GM12878 (cell line): ENCODE measurements at regions of chr20 and their contacts with region 1.

Region 1: GRCh38 chr20:19661717-19662636 is 96.1 kb upstream of the RIN2 start:
- DNase-seq: no peak
- ATAC-seq: peak; percentile 72
- H3K4me3 ChIP-seq: no peak overlapping the region
- H3K27ac ChIP-seq: no peak overlapping the region
- H3K4me1 ChIP-seq: peaks cover 11% of the 10 kb centered on the region
- H3K27me3 ChIP-seq: no peaks in the 10 kb centered on the region
- CTCF ChIP-seq: peak; percentile 96 to 99 (median 99); a peak in 5 of 6 replicates
- EP300 ChIP-seq: no peak
- POLR2A ChIP-seq: no peak
- RAD21 ChIP-seq: peak; percentile 99

Region 2: GRCh38 chr20:19205977-19206396 is 456.0 kb before region 1 on chr20:
- CTCF ChIA-PET with region 1: interaction called, 73 read pairs
- POLR2A ChIA-PET with region 1: no interaction called
- RAD21 ChIA-PET with region 1: interaction called, 21 read pairs
- SMC1A ChIA-PET with region 1: interaction called, 35 read pairs
- in situ Hi-C with region 1: loop called (anchors 5 kb)
- intact Hi-C with region 1: loop called (anchors 1 kb)
- DNase-seq: peak; percentile 8
- ATAC-seq: peak; percentile 90
- H3K4me3 ChIP-seq: no peak overlapping the region
- H3K27ac ChIP-seq: no peak overlapping the region
- H3K4me1 ChIP-seq: no peaks in the 10 kb centered on the region
- H3K27me3 ChIP-seq: no peaks in the 10 kb centered on the region; a peak in 3 of 4 replicates
- CTCF ChIP-seq: peak; percentile 82 to 85 (median 85)
- EP300 ChIP-seq: no peak
- POLR2A ChIP-seq: no peak
- RAD21 ChIP-seq: peak; percentile 80

Region 3: DNA sequence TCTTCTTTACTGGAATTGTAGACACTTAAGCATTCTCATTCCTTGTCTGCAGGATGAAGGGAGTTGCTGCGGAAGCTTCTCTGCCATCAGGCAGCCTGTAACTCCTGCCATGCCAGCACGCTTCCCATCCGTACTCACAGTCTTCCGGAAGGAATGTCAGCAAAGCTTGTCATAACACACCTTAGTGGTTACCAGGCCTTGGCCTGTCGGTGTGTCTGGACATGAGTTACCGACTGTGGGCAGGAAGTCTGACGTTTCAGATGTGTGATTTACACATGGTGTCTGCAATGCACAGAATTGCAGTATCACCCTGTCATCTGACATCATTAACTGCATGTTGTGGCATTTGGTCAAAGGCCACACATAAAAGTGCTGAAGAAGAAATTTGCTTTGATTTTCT is 347.4 kb before region 1 on chr20:
- CTCF ChIA-PET with region 1: no interaction called
- POLR2A ChIA-PET with region 1: no interaction called
- RAD21 ChIA-PET with region 1: no interaction called
- SMC1A ChIA-PET with region 1: no interaction called
- in situ Hi-C with region 1: no loop called
- intact Hi-C with region 1: no loop called
- DNase-seq: no peak
- ATAC-seq: no peak
- H3K4me3 ChIP-seq: no peak overlapping the region
- H3K27ac ChIP-seq: no peak overlapping the region
- H3K4me1 ChIP-seq: no peaks in the 10 kb centered on the region
- H3K27me3 ChIP-seq: peaks cover 0 to 2% of the 10 kb centered on the region in 2 experiments; a peak in 3 of 4 replicates
- CTCF ChIP-seq: no peak
- EP300 ChIP-seq: no peak
- POLR2A ChIP-seq: no peak
- RAD21 ChIP-seq: no peak

Region 4: DNA sequence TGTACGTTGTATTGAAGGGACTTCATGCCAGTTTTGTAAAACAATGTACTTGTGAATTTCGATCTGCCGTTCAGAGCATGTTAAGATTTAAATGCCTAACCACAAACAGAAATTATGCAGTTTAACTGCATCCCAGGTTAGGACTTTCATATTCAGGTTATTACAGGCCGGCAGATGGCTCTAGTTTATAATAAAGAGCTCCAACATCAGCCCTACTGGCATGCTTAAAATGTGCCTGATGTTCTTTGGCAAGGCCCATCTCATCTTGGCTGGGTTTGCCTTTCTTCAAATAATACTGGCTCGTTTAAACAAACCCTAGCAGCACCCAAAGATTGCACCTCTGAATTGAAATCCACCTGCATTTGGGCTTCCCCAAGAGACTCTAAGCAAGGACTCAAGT is 73.2 kb before region 1 on chr20:
- CTCF ChIA-PET with region 1: interaction called, 24 read pairs
- POLR2A ChIA-PET with region 1: interaction called, 3 read pairs
- RAD21 ChIA-PET with region 1: interaction called, 7 read pairs
- SMC1A ChIA-PET with region 1: interaction called, 6 read pairs
- in situ Hi-C with region 1: no loop called
- intact Hi-C with region 1: no loop called
- DNase-seq: no peak
- ATAC-seq: no peak
- H3K4me3 ChIP-seq: no peak overlapping the region
- H3K27ac ChIP-seq: no peak overlapping the region
- H3K4me1 ChIP-seq: no peaks in the 10 kb centered on the region
- H3K27me3 ChIP-seq: no peaks in the 10 kb centered on the region; a peak in 1 of 4 replicates
- CTCF ChIP-seq: no peak
- EP300 ChIP-seq: no peak
- POLR2A ChIP-seq: no peak
- RAD21 ChIP-seq: no peak

Region 5: DNA sequence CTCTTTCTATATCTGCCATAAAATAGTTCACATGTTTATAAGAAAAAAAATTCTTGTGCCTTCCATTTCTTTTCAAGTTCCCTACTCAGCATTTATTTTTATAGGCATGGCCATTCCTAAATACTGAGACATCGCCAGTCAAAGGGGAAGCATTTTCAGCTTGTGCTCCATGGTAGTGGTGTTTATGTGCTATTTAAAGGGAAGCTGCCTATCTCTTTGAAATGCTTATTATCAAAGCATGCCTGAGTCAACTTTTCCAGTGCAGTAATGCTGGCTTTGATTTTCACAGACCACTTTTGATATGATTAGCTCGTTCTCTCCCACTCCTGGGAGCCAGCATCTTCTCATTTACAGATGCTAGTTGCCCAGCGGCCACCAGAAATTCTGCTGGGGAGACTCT is 28.0 kb before region 1 on chr20:
- CTCF ChIA-PET with region 1: interaction called, 264 read pairs
- POLR2A ChIA-PET with region 1: no interaction called
- RAD21 ChIA-PET with region 1: interaction called, 94 read pairs
- SMC1A ChIA-PET with region 1: interaction called, 150 read pairs
- in situ Hi-C with region 1: no loop called
- intact Hi-C with region 1: no loop called
- DNase-seq: no peak
- ATAC-seq: no peak
- H3K4me3 ChIP-seq: no peak overlapping the region
- H3K27ac ChIP-seq: no peak overlapping the region
- H3K4me1 ChIP-seq: no peaks in the 10 kb centered on the region
- H3K27me3 ChIP-seq: no peaks in the 10 kb centered on the region
- CTCF ChIP-seq: no peak
- EP300 ChIP-seq: no peak
- POLR2A ChIP-seq: no peak
- RAD21 ChIP-seq: no peak

Region 6: DNA sequence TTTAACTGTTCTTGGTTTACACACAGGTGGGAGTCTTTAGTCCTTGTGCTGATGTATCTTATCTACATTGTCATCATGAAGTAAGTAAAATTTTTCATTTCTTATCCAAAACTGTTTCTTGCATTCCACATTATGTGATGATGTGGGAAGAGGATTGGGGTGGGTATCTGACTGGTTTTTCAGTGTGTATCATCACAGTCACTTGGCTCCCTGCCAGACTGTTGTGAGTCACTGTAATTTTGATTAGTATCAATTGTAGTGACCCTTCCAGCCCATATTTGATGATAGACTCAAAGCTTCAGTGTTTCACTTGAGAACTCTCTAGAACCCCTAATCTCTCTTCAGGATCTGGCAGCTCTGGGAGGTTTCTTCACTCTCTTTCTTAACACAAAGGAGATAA is 11.6 kb after region 1 on chr20:
- CTCF ChIA-PET with region 1: interaction called, 18 read pairs
- POLR2A ChIA-PET with region 1: no interaction called
- RAD21 ChIA-PET with region 1: interaction called, 3 read pairs
- SMC1A ChIA-PET with region 1: interaction called, 4 read pairs
- in situ Hi-C with region 1: no loop called
- intact Hi-C with region 1: no loop called
- DNase-seq: no peak
- ATAC-seq: no peak
- H3K4me3 ChIP-seq: no peak overlapping the region
- H3K27ac ChIP-seq: no peak overlapping the region
- H3K4me1 ChIP-seq: peaks cover 1% of the 10 kb centered on the region
- H3K27me3 ChIP-seq: no peaks in the 10 kb centered on the region
- CTCF ChIP-seq: no peak
- EP300 ChIP-seq: no peak
- POLR2A ChIP-seq: no peak
- RAD21 ChIP-seq: no peak

Region 7: GRCh38 chr20:19714579-19715045 is 52.6 kb after region 1 on chr20:
- CTCF ChIA-PET with region 1: no interaction called
- POLR2A ChIA-PET with region 1: no interaction called
- RAD21 ChIA-PET with region 1: no interaction called
- SMC1A ChIA-PET with region 1: no interaction called
- in situ Hi-C with region 1: no loop called
- intact Hi-C with region 1: no loop called
- DNase-seq: no peak
- ATAC-seq: no peak
- H3K4me3 ChIP-seq: no peak overlapping the region
- H3K27ac ChIP-seq: no peak overlapping the region
- H3K4me1 ChIP-seq: no peaks in the 10 kb centered on the region
- H3K27me3 ChIP-seq: peaks cover 0 to 2% of the 10 kb centered on the region in 2 experiments; a peak in 1 of 4 replicates
- CTCF ChIP-seq: no peak
- EP300 ChIP-seq: no peak
- POLR2A ChIP-seq: no peak
- RAD21 ChIP-seq: no peak